Caco-2 (cell line): ENCODE measurements at regions of chr2 and their contacts with region 1.

Region 1: DNA sequence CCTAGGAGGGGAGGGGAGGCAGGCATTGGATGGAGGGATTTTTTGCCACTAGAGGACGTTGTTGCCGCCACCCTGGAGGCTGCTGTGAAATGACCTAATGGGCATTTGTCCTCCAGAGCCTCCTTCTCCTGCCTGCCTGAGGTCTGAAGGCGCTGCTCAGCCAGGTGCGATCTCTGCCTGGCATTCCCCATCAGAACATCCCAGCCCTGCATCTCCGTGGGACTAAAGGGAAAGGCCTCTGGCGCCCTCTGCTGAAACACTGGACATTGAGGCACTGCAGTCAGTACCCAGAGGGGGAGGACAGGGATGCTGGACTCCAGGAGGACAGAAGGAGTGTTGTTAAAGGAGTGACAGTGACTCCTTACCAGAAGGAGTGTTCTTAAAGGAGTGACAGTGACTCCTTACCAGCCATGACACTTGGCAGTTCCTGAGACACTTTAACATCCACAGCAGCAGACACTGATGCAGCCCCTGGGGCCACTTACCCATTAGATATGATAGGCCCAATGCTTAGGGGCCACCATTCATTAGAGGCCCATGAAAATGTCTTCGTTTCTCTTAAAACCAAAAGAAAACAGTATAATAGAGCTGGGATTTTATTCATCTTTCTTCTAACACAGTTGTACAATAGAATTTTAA is 17.0 kb downstream of the THNSL2 start:
- DNase-seq: peak; percentile 82 to 83
- H3K4me3 ChIP-seq: no peak overlapping the region
- H3K4me3 Mint-ChIP-seq: no peak overlapping the region
- H3K27ac Mint-ChIP-seq: no peak overlapping the region
- H3K4me1 ChIP-seq: no peaks in the 10 kb centered on the region
- H3K4me1 Mint-ChIP-seq: no peaks in the 10 kb centered on the region
- H3K27me3 ChIP-seq: no peaks in the 10 kb centered on the region
- H3K27me3 Mint-ChIP-seq: no peaks in the 10 kb centered on the region
- CTCF ChIP-seq: peak; percentile 75 to 92

Region 2: GRCh38 chr2:88016086-88016959 is 170.8 kb before region 1 on chr2 and contains the start of gene RNU2-63P:
- CTCF ChIA-PET with region 1: no interaction called
- POLR2A ChIA-PET with region 1: no interaction called
- intact Hi-C with region 1: loop called (anchors 2 kb)
- DNase-seq: peak; percentile 86 to 87
- H3K4me3 ChIP-seq: peak within 1 kb of the TSS; percentile 92
- H3K4me3 Mint-ChIP-seq: peak within 1 kb of the TSS; percentile 83
- H3K27ac Mint-ChIP-seq: peak within 1 kb of the TSS; percentile 99
- H3K4me1 ChIP-seq: no peaks in the 10 kb centered on the region; the same call in 1 of the 2 replicates
- H3K4me1 Mint-ChIP-seq: peaks cover 15% of the 10 kb centered on the region
- H3K27me3 ChIP-seq: no peaks in the 10 kb centered on the region
- H3K27me3 Mint-ChIP-seq: peaks cover 3% of the 10 kb centered on the region
- CTCF ChIP-seq: no peak
- total RNA-seq, gene RNU2-63P: 18.6 and 19.4 TPM in 2 replicates

Region 3: DNA sequence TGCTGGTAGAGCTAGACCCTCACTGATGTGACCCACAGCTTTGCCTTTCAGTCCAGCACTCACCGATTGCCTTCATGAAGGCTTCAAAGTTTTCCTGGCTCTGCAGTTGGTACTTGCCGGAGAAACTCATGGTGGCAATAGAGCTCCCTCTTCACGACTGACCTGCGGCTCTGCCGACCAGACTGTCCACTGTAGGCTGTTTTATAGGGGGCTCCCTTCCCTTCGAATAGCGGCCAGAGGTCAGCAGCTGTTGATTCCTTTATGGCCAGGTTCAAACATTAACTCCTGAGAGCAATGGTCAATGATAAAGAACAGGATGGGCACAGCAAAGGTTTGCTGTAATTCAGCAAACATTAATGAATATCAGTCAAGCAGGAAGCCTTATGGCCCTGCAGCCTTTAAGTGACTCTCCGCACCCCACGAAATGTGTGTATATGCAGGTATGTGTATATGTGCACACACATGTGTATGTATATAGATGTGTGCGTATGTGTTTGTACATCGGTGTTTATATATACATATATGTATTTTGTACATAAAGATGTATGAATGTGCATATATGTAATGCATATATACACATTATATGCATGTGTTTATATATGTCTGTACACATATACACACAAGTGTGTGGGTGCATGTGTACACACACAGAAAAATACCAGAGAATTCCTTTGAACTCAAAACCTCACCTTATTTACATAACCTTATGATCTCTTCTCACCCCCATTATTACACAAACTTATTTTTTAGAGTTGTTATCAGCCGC is 59.1 kb before region 1 on chr2 and contains the start of gene FABP1:
- CTCF ChIA-PET with region 1: no interaction called
- POLR2A ChIA-PET with region 1: no interaction called
- intact Hi-C with region 1: no loop called
- DNase-seq: peak; percentile 72 to 84
- H3K4me3 ChIP-seq: peak within 1 kb of the TSS; percentile 40
- H3K4me3 Mint-ChIP-seq: peak within 1 kb of the TSS; percentile 58
- H3K27ac Mint-ChIP-seq: peak within 1 kb of the TSS; percentile 69
- H3K4me1 ChIP-seq: peaks cover 62% of the 10 kb centered on the region
- H3K4me1 Mint-ChIP-seq: peaks cover 58% of the 10 kb centered on the region
- H3K27me3 ChIP-seq: no peaks in the 10 kb centered on the region
- H3K27me3 Mint-ChIP-seq: no peaks in the 10 kb centered on the region
- CTCF ChIP-seq: no peak
- total RNA-seq, gene FABP1: 41.0 and 44.5 TPM in 2 replicates

Region 4: GRCh38 chr2:88307817-88308216 is 120.7 kb after region 1 on chr2:
- CTCF ChIA-PET with region 1: interaction called, 3 read pairs
- POLR2A ChIA-PET with region 1: no interaction called
- intact Hi-C with region 1: loop called (anchors 1 kb)
- DNase-seq: peak in 1 of 2 experiments; percentile 61
- H3K4me3 ChIP-seq: no peak overlapping the region
- H3K4me3 Mint-ChIP-seq: no peak overlapping the region
- H3K27ac Mint-ChIP-seq: no peak overlapping the region
- H3K4me1 ChIP-seq: no peaks in the 10 kb centered on the region
- H3K4me1 Mint-ChIP-seq: no peaks in the 10 kb centered on the region
- H3K27me3 ChIP-seq: no peaks in the 10 kb centered on the region
- H3K27me3 Mint-ChIP-seq: peaks cover 4% of the 10 kb centered on the region
- CTCF ChIP-seq: peak; percentile 39 to 52

Region 5: DNA sequence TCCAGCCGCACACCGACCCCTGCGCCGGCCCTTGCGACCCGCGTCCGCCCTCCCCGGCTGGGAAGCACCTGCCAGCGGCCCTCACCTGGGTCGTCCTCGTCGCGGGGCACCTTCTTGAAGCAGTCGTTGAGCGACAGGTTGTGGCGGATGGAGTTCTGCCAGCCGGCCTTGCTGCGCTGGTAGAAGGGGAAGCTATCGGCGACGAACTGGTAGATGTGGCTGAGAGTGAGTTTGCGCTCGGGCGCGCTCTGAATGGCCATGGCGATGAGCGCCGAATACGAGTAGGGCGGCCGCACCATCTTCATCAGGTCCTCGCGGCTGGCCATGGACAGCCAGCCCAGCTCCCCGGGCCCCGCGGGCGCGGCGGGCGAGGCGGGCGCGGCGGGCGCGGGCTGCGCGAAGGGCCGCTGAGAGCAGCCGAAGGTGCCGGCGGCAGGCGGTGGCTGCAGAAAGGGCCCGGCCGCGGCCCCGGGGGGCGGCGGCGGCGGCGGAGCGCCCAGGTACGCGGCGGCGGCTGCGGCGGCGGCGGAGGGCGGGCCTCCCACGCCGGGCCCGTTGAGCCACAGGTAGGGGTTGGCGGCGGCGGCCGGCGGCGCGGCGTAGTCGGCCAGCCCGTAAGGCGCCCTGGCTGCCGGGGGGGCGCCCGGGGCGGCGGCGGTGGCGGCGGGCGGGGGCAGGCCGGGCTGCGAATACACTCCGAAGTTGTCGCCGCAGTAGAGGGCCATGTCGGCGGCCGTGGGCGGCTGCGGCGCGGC is 264.8 kb after region 1 on chr2:
- CTCF ChIA-PET with region 1: interaction called, 4 read pairs
- POLR2A ChIA-PET with region 1: no interaction called
- intact Hi-C with region 1: loop called (anchors 1 kb)
- DNase-seq: no peak
- H3K4me3 ChIP-seq: no peak overlapping the region
- H3K4me3 Mint-ChIP-seq: peak overlapping the region; percentile 48
- H3K27ac Mint-ChIP-seq: no peak overlapping the region
- H3K4me1 ChIP-seq: peaks cover 5% of the 10 kb centered on the region; the same call in 1 of the 2 replicates
- H3K4me1 Mint-ChIP-seq: no peaks in the 10 kb centered on the region
- H3K27me3 ChIP-seq: no peaks in the 10 kb centered on the region; the same call in 1 of the 2 replicates
- H3K27me3 Mint-ChIP-seq: peaks cover 13% of the 10 kb centered on the region
- CTCF ChIP-seq: no peak

Region 6: DNA sequence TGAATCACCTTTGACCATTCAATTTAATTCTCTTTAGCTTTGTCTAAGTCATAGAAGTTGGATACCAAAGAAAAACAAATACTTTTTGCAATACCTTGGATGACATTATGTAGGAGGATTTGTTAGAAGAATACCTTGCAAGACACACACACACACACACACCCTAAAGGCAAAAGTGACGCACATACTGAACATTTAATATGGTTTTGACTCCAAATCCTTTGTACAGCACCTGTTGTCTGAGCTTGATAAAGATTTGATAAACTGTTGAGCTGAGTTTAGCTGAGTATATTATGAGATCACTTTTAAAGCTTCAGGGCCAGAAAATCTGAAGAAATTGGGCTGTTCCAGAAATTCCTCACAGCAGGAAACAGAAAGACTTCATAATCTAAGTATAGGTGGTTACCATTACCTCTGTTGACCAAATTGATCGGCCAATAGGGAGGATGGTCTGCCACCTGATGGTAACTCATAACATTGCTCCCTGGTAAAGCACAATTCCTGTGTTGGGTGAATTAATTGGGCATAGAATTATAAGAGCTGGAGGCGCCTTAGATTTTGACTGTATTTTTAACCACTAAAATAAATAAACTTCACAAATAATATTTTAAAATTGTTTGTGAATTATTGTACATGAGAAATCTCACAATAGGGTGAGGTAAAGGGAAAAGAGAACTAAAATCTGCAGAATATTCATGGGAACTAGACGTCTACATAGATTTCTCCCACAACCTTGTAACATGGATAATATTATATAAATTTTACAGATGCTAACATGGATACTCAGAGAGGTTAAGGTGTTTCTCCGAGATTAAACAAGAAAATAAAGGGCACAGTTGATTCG is 482.4 kb after region 1 on chr2:
- CTCF ChIA-PET with region 1: no interaction called
- POLR2A ChIA-PET with region 1: no interaction called
- intact Hi-C with region 1: loop called (anchors 5 kb)
- DNase-seq: peak; percentile 49 to 68
- H3K4me3 ChIP-seq: no peak overlapping the region
- H3K4me3 Mint-ChIP-seq: no peak overlapping the region
- H3K27ac Mint-ChIP-seq: no peak overlapping the region
- H3K4me1 ChIP-seq: peaks cover 16% of the 10 kb centered on the region
- H3K4me1 Mint-ChIP-seq: peaks cover 17% of the 10 kb centered on the region
- H3K27me3 ChIP-seq: no peaks in the 10 kb centered on the region
- H3K27me3 Mint-ChIP-seq: no peaks in the 10 kb centered on the region
- CTCF ChIP-seq: peak; percentile 74 to 78